ENCODE measurements at regions of chr12 and their contacts with region 1.

Region 1: DNA sequence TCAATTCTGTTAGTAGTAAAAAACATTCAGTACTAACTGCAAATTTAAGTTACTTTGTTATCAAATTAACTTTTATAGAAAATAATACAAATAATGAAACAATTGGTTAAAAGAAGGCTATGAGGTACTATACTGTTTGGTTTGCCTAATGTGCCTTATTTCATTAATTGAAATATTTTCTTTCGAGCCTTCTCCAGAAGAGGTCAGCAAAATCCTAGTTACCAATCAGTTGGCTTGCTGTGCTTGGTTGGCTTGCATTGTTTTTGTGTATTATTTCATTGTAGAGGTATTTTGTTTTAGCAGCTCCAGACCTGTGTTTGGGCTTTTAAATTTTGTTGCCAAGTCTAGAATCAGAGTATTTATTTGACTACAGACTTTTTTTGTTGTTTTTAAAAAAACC is 68.5 kb downstream of the AEBP2 start:
- DNase-seq: peak; percentile 75
- H3K4me3 ChIP-seq: no peak overlapping the region
- H3K27ac ChIP-seq: no peak overlapping the region
- H3K4me1 ChIP-seq: peaks cover 7% of the 10 kb centered on the region
- H3K27me3 ChIP-seq: no peaks in the 10 kb centered on the region
- CTCF ChIP-seq: peak in 1 of 2 donors; percentile 23
- POLR2A ChIP-seq: no peak

Region 2: DNA sequence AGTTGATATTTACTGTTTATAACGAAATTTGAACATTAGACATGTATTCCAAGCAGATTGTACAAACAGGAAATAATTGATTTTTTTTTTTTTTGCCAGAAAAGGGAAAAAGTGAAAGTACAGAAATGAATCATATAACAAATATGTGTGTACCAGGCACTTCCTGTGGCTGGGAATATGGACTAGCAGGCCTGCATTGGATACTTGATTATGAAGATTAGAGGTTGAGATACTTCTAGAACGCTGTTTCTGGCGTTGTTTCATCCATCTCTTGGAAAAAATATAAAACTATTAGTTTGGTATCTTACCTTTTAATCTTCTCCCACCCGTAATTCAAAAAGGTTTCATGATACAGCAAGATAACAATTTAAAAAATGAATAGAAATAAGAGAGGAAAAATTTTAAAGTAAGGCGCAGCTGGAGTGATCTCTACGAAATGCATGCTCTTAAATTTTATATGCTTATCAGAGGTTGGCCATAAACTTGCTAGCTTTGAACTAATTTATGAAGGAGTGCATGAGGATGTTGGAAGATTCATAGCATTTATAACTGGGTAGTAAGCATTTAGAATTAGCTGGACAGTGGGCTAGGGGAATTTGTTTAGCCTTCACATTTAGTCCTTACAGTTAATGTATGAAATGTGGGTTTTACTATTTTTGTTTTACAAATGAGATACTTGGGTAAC is 22.3 kb after region 1 on chr12:
- CTCF ChIA-PET with region 1: interaction called, 10 read pairs
- POLR2A ChIA-PET with region 1: no interaction called
- dilution Hi-C with region 1: no loop called
- intact Hi-C with region 1: no loop called
- DNase-seq: peak; percentile 82
- H3K4me3 ChIP-seq: peak overlapping the region in 1 of 3 experiments; percentile 17
- H3K27ac ChIP-seq: peak overlapping the region; percentile 84
- H3K4me1 ChIP-seq: peaks cover 36% of the 10 kb centered on the region
- H3K27me3 ChIP-seq: no peaks in the 10 kb centered on the region
- CTCF ChIP-seq: no peak
- POLR2A ChIP-seq: peak; percentile 50

Region 3: GRCh38 chr12:19546611-19547162 is 38.9 kb after region 1 on chr12:
- CTCF ChIA-PET with region 1: interaction called, 19 read pairs
- POLR2A ChIA-PET with region 1: interaction called, 5 read pairs
- dilution Hi-C with region 1: no loop called
- intact Hi-C with region 1: no loop called
- DNase-seq: peak; percentile 92
- H3K4me3 ChIP-seq: peak overlapping the region in 1 of 3 experiments; percentile 22
- H3K27ac ChIP-seq: peak overlapping the region; percentile 84
- H3K4me1 ChIP-seq: peaks cover 23% of the 10 kb centered on the region
- H3K27me3 ChIP-seq: no peaks in the 10 kb centered on the region
- CTCF ChIP-seq: no peak
- POLR2A ChIP-seq: no peak

Region 4: GRCh38 chr12:19643635-19644034 is 135.8 kb after region 1 on chr12:
- CTCF ChIA-PET with region 1: interaction called, 40 read pairs
- POLR2A ChIA-PET with region 1: no interaction called
- dilution Hi-C with region 1: no loop called
- intact Hi-C with region 1: loop called (anchors 1 kb)
- DNase-seq: peak; percentile 83
- H3K4me3 ChIP-seq: no peak overlapping the region
- H3K27ac ChIP-seq: no peak overlapping the region
- H3K4me1 ChIP-seq: no peaks in the 10 kb centered on the region
- H3K27me3 ChIP-seq: no peaks in the 10 kb centered on the region
- CTCF ChIP-seq: peak; percentile 47 to 64
- POLR2A ChIP-seq: no peak

Region 5: GRCh38 chr12:20220339-20220738 is 712.5 kb after region 1 on chr12:
- CTCF ChIA-PET with region 1: interaction called, 4 read pairs
- POLR2A ChIA-PET with region 1: no interaction called
- dilution Hi-C with region 1: no loop called
- intact Hi-C with region 1: loop called (anchors 1 kb)
- DNase-seq: peak; percentile 61
- H3K4me3 ChIP-seq: no peak overlapping the region
- H3K27ac ChIP-seq: no peak overlapping the region
- H3K4me1 ChIP-seq: no peaks in the 10 kb centered on the region
- H3K27me3 ChIP-seq: no peaks in the 10 kb centered on the region
- CTCF ChIP-seq: peak; percentile 26 to 30
- POLR2A ChIP-seq: no peak

Region 6: DNA sequence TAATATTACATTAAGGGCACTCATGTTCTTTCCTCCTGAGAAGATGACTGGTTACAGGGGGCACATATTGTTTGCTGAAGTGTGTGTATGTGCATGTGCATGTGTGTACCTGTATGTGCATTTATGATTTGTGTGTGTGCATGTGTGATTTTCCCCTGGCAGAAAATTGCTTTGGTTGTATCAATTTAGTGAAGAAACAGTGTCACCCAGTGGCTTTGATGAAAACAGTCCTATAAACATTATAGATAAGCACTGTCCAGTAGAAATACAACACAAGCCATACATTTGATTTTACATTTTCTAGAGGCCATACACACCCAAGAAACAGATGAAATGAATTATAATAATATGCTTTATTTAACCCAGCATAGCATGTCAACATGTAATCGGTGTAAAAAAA is 869.2 kb after region 1 on chr12:
- CTCF ChIA-PET with region 1: interaction called, 3 read pairs
- POLR2A ChIA-PET with region 1: no interaction called
- dilution Hi-C with region 1: no loop called
- intact Hi-C with region 1: loop called (anchors 5 kb)
- DNase-seq: peak; percentile 60
- H3K4me3 ChIP-seq: no peak overlapping the region
- H3K27ac ChIP-seq: no peak overlapping the region
- H3K4me1 ChIP-seq: peaks cover 37% of the 10 kb centered on the region
- H3K27me3 ChIP-seq: no peaks in the 10 kb centered on the region
- CTCF ChIP-seq: peak; percentile 22 to 35
- POLR2A ChIP-seq: no peak